ENCODE measurements at regions of chr6 and their contacts with region 1.

Region 1: DNA sequence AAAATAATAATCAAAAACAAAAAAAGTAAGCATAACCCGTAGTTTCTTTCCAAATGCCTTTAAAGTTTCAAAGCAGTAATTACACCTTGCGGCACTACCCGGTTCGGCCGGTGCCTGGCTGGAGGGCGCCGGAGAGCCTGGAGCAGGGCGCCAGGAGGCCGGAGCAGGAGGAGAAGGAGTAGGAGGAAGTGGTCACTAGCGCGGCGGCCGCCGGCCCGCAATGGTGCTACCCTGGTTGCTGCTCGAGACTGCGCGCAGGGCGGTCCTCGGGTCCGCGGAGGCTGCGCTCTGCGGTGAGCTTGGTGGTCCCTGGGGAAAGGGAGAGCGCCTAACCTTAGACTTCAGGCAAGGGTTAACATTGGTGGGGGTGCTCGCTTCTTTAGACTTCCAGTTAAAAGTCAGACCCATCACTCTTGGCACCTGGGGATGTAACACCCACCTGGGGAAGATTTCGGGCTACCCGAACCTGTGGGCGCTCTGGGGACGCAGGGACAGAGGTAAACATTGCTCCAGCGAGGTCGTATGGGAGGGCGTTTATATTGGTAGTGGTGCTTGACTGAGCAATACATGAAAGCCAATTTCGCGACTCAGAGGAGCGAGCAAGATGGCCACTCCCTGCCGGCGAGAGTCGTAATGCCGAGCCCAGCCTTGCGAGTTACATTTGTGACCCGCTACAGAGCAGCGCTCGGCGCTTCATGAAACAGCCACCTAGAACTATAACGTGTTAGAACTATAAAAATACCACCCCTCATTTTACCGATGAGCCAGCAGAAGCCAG is 5.8 kb upstream of the USP45 start:
- DNase-seq: peak; percentile 89
- ATAC-seq: peak; percentile 92
- H3K4me3 Mint-ChIP-seq: peak overlapping the region; percentile 90
- H3K27ac Mint-ChIP-seq: peak overlapping the region; percentile 99
- H3K4me1 Mint-ChIP-seq: peaks cover 17% of the 10 kb centered on the region
- H3K27me3 Mint-ChIP-seq: no peaks in the 10 kb centered on the region

Region 2: GRCh38 chr6:99543968-99544367 is 22.9 kb after region 1 on chr6:
- CTCF ChIA-PET with region 1: interaction called, 10 read pairs
- POLR2A ChIA-PET with region 1: no interaction called
- intact Hi-C with region 1: no loop called
- DNase-seq: no peak
- ATAC-seq: no peak
- H3K4me3 Mint-ChIP-seq: no peak overlapping the region
- H3K27ac Mint-ChIP-seq: no peak overlapping the region
- H3K4me1 Mint-ChIP-seq: no peaks in the 10 kb centered on the region
- H3K27me3 Mint-ChIP-seq: no peaks in the 10 kb centered on the region

Region 3: GRCh38 chr6:99568103-99568933 is 47.3 kb after region 1 on chr6 and contains the start of gene CCNC:
- CTCF ChIA-PET with region 1: interaction called, 22 read pairs
- POLR2A ChIA-PET with region 1: interaction called, 5 read pairs
- intact Hi-C with region 1: loop called (anchors 1 kb)
- DNase-seq: peak; percentile 94
- ATAC-seq: peak; percentile 98
- H3K4me3 Mint-ChIP-seq: peak within 1 kb of the TSS; percentile 97
- H3K27ac Mint-ChIP-seq: peak within 1 kb of the TSS; percentile 98
- H3K4me1 Mint-ChIP-seq: peaks cover 25% of the 10 kb centered on the region
- H3K27me3 Mint-ChIP-seq: no peaks in the 10 kb centered on the region
- total RNA-seq, gene CCNC: 50.7 to 67.3 TPM

Region 4: DNA sequence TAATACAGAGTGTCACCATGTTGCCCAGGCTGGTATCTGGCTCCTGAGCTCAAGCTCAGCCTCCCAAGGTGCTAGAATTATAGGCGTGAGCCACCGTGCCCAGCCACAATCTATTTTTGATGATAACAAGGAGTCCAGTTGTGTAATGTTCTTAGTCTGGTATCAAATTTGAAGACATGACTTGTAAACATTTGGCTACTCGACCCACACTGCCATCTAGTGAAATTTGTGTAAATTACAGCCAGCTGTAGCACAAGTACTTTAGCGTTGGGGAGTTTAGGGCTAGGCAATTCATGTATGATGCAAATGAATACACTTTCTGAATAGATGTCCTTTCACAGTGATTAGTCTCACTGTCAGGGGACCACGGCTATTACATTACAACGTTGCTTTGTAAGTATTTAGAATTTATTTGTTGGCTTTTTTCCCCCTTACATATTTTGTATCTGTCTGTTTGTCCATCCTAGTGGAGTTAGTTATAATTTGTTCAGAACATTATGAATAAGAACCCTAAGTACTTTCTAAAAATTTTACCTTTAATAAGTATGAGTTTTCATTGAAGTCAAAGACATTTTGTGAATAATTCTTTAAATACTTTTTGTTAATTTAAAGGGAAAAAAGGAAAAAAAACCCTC is 225.3 kb after region 1 on chr6:
- CTCF ChIA-PET with region 1: no interaction called
- POLR2A ChIA-PET with region 1: no interaction called
- intact Hi-C with region 1: loop called in 1 of 2 experiments (anchors 5 kb)
- DNase-seq: peak; percentile 61
- ATAC-seq: peak; percentile 73
- H3K4me3 Mint-ChIP-seq: no peak overlapping the region
- H3K27ac Mint-ChIP-seq: no peak overlapping the region
- H3K4me1 Mint-ChIP-seq: no peaks in the 10 kb centered on the region
- H3K27me3 Mint-ChIP-seq: peaks cover 21% of the 10 kb centered on the region

Region 5: DNA sequence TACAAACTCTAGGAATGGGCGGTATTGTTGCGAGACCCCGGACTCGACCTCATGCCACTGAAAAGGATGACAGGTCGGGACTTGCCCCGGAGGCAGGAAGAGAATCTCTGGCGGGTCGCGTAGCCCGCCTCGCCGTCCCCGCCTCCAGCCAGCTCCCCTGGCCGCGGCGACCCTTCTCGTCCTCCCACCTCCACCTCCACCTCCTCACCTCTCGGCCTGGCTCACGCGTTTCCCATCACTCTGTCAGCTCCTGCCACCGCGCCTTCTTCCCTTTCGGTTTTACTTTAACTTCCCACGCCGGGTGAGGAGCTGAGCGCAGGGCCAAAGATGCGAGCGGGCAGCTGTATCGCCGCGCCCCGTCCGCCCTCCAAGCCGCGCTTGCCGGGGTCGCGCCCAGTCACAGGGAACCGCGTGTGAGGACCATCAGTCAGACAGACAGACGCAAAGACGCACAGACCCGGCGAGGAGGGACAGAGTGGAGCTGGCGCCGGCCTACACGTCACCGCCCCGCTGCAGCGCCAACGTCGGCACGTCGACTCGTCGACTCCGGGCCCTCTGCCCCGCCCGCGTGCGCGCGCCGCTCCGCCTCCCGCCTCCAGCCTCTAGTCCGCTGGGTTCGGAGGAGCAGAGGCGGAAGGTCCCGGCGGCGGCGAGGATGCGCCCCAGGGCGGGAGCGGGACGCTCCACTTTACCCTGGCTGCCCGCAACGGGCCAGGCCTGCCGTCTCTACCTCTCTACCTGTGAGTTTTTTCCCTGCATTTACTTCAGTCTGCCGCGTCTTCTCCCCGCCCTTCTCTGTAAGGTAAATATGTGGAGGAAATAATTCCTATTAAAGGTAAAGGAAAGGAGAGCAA is 1360.0 kb after region 1 on chr6 and contains the start of gene ASCC3:
- CTCF ChIA-PET with region 1: no interaction called
- POLR2A ChIA-PET with region 1: no interaction called
- intact Hi-C with region 1: loop called in 1 of 2 experiments (anchors 5 kb)
- DNase-seq: peak; percentile 96
- ATAC-seq: peak; percentile 97
- H3K4me3 Mint-ChIP-seq: peak within 1 kb of the TSS; percentile 99
- H3K27ac Mint-ChIP-seq: peak within 1 kb of the TSS; percentile 100
- H3K4me1 Mint-ChIP-seq: peaks cover 38% of the 10 kb centered on the region
- H3K27me3 Mint-ChIP-seq: peaks cover 1% of the 10 kb centered on the region
- total RNA-seq, gene ASCC3: 50.3 to 53.4 TPM